ENCODE measurements at regions of chr11 and their contacts with region 1.

Region 1: DNA sequence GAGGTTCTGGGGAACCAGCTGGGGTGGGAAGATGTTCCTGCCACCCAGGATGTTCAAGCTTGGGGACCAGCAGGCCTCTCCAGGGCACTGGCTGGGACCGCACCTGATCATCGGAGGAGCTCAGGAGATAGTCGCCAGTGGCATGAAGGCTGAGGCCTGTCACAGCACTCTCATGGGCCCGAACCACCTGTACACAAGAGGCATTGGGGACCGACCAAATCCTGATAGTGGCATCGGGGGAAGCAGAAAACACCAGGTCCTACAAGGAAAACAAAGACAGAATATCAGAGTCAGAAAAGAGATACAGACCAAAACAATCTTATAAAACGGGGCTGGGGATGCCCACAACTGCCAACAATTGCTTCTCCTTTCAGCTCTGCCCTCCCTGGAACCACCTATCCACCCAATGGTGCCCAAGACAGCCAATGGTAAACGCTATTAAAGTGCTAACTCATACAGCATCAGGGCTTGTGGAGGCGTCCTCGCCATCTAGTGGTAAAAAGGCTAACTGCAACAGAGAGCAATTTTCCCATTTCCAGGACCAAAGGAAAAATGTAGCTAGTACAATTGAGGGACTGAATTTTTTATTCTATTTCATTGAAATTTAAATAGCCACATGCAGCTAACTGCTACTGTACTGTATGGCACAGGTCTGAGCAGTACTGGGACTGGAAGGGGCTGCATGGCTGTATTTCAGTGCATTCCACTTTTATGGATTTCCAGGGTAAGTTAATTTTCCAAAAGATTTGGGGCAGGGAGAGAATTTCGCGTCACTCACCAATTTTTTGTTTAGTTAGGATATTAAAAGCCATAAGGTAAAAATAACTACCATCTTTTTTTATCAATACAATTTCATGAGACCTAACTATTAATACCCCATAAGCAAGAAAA is 7.1 kb downstream of the PRPF19 start:
- DNase-seq: no peak
- ATAC-seq: peak; percentile 93
- H3K4me3 ChIP-seq: no peak overlapping the region
- H3K27ac ChIP-seq: no peak overlapping the region
- H3K4me1 ChIP-seq: no peaks in the 10 kb centered on the region; the same call in 1 of the 2 replicates
- H3K27me3 ChIP-seq: no peaks in the 10 kb centered on the region
- CTCF ChIP-seq: peak; percentile 85 to 98 (median 94)
- EP300 ChIP-seq: no peak
- POLR2A ChIP-seq: no peak
- RAD21 ChIP-seq: peak; percentile 64

Region 2: DNA sequence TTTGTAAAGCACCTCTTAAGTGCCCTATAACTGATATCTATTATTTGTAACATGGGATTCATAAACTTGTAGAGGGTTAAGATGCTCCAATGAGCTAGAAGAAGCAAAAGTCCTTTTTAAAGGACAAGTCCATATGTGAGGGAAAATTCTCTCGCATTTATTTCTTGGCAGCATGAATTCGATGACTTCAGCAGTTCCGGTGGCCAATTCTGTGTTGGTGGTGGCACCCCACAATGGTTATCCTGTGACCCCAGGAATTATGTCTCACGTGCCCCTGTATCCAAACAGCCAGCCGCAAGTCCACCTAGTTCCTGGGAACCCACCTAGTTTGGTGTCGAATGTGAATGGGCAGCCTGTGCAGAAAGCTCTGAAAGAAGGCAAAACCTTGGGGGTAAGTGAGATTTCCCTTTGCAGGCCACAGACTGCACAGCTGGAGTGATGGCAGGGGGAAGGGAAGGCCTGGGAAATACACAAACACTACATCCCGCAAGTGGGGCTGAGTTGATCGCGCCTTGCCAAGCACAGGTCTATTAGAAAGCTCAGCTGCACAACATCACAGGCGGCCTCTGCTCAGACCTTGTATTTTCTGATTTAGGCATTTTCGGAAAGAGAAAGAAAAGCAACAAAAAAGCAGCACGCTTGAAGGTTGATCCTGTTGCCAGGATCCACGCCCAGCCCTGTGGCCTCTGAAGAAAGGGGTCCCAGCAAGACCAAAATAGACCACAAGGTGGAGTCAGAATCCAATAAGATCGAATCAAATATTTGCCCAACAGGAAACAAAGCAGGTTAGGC is 198.4 kb before region 1 on chr11:
- CTCF ChIA-PET with region 1: interaction called, 3 read pairs
- POLR2A ChIA-PET with region 1: no interaction called
- RAD21 ChIA-PET with region 1: no interaction called
- SMC1A ChIA-PET with region 1: no interaction called
- in situ Hi-C with region 1: no loop called
- intact Hi-C with region 1: loop called (anchors 5 kb)
- DNase-seq: no peak
- ATAC-seq: peak; percentile 87
- H3K4me3 ChIP-seq: no peak overlapping the region
- H3K27ac ChIP-seq: no peak overlapping the region
- H3K4me1 ChIP-seq: no peaks in the 10 kb centered on the region
- H3K27me3 ChIP-seq: no peaks in the 10 kb centered on the region
- CTCF ChIP-seq: peak; percentile 54 to 56 (median 55); a peak in 5 of 6 replicates
- EP300 ChIP-seq: no peak
- POLR2A ChIP-seq: no peak
- RAD21 ChIP-seq: peak; percentile 64

Region 3: DNA sequence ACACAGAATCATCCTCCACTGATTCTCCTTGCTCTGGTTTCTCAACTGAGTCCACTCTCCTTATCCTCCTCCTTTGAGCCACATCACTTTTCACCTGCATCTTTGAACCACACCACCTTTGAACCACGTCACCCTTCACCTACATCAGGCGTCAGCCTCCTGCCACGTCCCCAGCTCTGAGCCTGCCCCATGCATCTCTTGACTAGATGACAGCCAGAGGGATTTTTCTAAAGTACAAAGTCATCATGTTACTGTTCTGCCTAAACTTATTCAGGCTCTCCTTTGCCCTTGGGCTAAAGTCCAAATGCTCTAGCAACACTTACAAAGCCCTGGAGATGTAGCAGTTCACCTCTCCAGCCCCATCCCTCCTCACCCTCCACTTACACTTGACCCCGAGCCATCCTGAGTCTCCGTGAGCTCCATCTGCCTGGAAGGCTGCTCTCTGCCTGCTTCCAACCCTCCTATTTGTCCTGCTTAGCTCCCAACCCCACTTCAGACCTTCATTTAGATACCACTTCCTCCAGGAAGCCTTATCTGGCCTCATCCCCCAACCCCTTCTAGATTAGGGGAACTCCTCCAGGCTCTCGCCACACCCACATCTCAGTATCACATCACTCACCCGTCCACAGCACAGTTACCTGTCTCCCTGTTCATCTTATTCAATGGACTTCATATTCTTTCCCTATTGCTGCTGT is 117.9 kb before region 1 on chr11:
- CTCF ChIA-PET with region 1: interaction called, 27 read pairs
- POLR2A ChIA-PET with region 1: interaction called, 3 read pairs
- RAD21 ChIA-PET with region 1: interaction called, 4 read pairs
- SMC1A ChIA-PET with region 1: interaction called, 6 read pairs
- in situ Hi-C with region 1: no loop called
- intact Hi-C with region 1: no loop called
- DNase-seq: no peak
- ATAC-seq: peak; percentile 77
- H3K4me3 ChIP-seq: no peak overlapping the region
- H3K27ac ChIP-seq: no peak overlapping the region
- H3K4me1 ChIP-seq: peaks cover 7% of the 10 kb centered on the region
- H3K27me3 ChIP-seq: no peaks in the 10 kb centered on the region
- CTCF ChIP-seq: no peak
- EP300 ChIP-seq: no peak
- POLR2A ChIP-seq: no peak
- RAD21 ChIP-seq: no peak

Region 4: DNA sequence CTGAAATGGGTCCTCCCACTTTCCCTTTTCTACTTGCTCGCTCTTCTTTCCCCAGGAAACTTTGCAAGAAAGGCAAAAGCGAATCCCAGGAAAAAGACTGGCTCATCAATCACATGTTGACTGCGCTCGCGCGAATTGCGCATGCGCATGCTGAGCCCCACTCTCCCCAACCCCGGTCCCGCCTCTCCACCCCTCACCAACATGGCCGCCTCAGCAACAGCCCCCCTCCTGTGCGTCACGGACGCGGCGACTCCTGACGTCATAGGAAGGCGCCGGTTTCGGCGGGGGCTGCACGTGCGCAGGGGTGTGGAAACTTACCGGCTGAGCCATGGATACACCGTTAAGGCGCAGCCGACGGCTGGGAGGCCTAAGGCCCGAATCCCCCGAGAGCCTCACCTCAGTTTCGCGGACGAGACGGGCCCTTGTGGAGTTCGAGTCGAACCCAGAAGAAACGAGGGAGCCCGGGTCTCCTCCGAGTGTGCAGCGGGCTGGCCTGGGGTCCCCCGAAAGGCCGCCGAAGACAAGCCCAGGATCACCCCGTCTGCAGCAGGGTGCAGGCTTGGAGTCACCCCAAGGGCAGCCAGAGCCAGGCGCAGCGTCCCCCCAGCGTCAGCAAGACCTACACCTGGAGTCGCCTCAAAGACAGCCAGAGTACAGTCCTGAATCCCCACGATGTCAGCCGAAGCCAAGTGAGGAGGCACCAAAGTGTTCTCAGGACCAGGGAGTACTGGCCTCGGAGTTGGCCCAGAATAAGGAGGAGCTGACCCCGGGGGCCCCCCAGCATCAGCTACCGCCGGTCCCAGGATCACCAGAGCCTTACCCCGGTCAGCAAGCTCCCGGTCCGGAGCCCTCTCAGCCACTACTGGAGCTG is 57.3 kb before region 1 on chr11 and contains the start of gene CCDC86:
- CTCF ChIA-PET with region 1: interaction called, 13 read pairs
- POLR2A ChIA-PET with region 1: no interaction called
- RAD21 ChIA-PET with region 1: no interaction called
- SMC1A ChIA-PET with region 1: interaction called, 4 read pairs
- in situ Hi-C with region 1: loop called (anchors 5 kb)
- intact Hi-C with region 1: loop called (anchors 2 kb)
- DNase-seq: peak; percentile 78
- ATAC-seq: peak; percentile 87
- H3K4me3 ChIP-seq: peak within 1 kb of the TSS; percentile 92
- H3K27ac ChIP-seq: peak within 1 kb of the TSS; percentile 72
- H3K4me1 ChIP-seq: peaks cover 4% of the 10 kb centered on the region
- H3K27me3 ChIP-seq: no peaks in the 10 kb centered on the region
- CTCF ChIP-seq: no peak
- EP300 ChIP-seq: peak in 1 of 2 experiments; percentile 18; a peak in 1 of 4 replicates
- POLR2A ChIP-seq: peak; percentile 73
- RAD21 ChIP-seq: no peak
- polyA plus RNA-seq, gene CCDC86: 2.0 to 4.4 TPM

Region 5: GRCh38 chr11:60887556-60887955 is 11.7 kb before region 1 on chr11:
- CTCF ChIA-PET with region 1: interaction called, 51 read pairs
- POLR2A ChIA-PET with region 1: no interaction called
- RAD21 ChIA-PET with region 1: interaction called, 4 read pairs
- SMC1A ChIA-PET with region 1: no interaction called
- in situ Hi-C with region 1: no loop called
- intact Hi-C with region 1: no loop called
- DNase-seq: no peak
- ATAC-seq: peak; percentile 93
- H3K4me3 ChIP-seq: no peak overlapping the region
- H3K27ac ChIP-seq: no peak overlapping the region
- H3K4me1 ChIP-seq: no peaks in the 10 kb centered on the region
- H3K27me3 ChIP-seq: no peaks in the 10 kb centered on the region
- CTCF ChIP-seq: peak; percentile 47 to 61 (median 58); a peak in 5 of 6 replicates
- EP300 ChIP-seq: no peak
- POLR2A ChIP-seq: no peak
- RAD21 ChIP-seq: peak; percentile 73

Region 6: GRCh38 chr11:61071208-61071681 is 172.0 kb after region 1 on chr11:
- CTCF ChIA-PET with region 1: no interaction called
- POLR2A ChIA-PET with region 1: no interaction called
- RAD21 ChIA-PET with region 1: no interaction called
- SMC1A ChIA-PET with region 1: no interaction called
- in situ Hi-C with region 1: no loop called
- intact Hi-C with region 1: no loop called
- DNase-seq: no peak
- ATAC-seq: peak; percentile 88
- H3K4me3 ChIP-seq: no peak overlapping the region
- H3K27ac ChIP-seq: peak overlapping the region; percentile 81
- H3K4me1 ChIP-seq: peaks cover 18% of the 10 kb centered on the region
- H3K27me3 ChIP-seq: no peaks in the 10 kb centered on the region
- CTCF ChIP-seq: no peak
- EP300 ChIP-seq: 0 out of 4 replicates have a peak, but pooled peaks of 1 of the 2 experiments have one; percentile 24
- POLR2A ChIP-seq: peak; percentile 74
- RAD21 ChIP-seq: 0 out of 2 replicates have a peak, but pooled peaks have one; percentile 19